Activated naive CD4-positive, alpha-beta T cell treated with anti-CD3 and anti-CD28 coated beads, Interleukin-2, amount 10 ng/mL, durations not matched to agents 7 days and 5 days (primary cell): ENCODE measurements at regions of chr19 and their contacts with region 1.

Region 1: DNA sequence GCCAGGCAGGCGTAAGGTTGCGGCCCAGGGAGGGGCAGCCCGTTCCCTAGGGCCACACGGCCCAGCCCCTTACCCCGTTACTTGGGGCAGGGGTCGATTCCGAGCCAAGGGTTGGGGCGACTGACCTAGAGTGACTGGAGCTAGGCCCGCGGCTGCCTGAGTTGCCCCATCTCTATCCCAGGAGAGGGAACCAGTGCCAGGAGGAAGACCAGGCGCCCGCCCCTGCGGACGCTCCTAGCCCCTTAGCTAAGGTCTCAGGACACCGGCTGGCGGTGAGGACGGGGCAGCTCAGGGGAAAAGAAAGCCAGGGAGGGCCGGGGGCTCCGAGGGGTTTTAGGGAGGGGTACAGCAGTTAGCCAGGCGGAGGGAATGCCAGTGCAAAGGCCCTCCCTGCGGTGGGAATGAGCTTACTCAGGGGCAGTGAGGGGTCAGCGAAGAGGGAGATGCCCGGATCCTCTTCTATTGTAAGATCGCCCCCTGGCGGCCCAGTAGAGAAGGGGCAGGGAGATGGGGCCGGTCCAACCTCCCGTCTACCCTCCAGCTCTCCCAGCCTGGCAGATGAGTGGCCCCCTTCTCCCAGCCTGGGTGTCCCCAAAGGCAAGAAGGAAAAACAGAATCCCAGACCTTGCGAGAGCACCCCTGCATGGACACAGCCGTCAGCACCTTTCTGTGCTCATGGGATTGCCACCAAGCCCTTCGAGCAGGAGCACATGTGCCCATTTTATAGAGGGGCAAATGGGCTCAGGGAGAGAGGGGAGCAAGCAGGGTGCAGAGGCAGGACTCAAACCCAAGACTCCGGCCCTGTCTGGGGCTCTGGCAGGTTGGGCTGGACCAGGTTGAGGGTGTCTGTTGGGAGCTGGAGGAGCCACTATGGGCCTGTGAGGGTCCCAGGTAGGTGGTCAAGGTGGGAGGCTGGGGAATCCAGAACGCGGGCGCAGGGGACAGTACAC is 16.3 kb downstream of the CILP2 start:
- DNase-seq: peak; percentile 68
- H3K4me3 Mint-ChIP-seq: no peak overlapping the region
- H3K27ac Mint-ChIP-seq: peak overlapping the region; percentile 52
- H3K4me1 Mint-ChIP-seq: peaks cover 19% of the 10 kb centered on the region
- H3K27me3 Mint-ChIP-seq: peaks cover 8% of the 10 kb centered on the region

Region 2: DNA sequence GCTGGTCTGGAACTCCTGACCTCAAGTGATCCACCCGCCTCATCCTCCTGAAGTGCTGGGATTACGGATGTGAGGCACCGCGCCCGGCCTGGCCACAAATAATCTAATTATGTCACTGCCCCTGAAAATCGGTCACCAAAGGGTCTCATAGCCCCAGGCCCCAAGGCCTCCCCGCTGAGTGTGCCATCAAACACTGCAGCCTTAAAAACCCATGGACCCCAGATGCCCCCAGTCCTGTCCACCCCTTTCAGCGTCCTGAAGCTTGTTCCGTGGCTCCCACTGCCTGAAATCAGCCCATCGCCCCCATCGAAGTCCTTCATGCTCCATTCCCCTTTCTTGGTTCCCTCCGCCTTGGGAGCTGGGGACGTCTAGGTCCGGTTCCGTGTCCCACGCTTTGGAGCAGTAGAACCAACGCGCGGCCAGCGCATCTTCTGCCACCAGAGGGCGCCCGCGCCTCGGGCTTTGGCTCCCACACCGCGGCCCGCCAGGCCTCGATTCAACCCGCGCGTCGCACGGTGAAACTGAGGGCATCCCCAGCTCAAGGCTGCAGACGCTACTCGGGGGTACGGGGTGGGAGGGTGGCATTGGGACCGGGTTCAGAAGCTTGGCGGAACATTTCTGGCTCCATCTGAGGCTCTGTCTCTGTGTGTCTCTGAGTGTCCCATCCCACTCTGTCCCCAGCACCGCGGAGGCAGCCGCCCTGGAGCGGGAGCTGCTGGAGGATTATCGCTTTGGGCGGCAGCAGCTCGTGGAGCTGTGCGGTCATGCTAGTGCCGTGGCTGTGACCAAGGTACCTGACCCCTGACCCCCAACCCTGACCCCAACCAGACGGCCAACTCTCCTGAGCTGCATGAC is 22.2 kb before region 1 on chr19:
- CTCF ChIA-PET with region 1: interaction called, 32 read pairs
- DNase-seq: peak; percentile 89
- H3K4me3 Mint-ChIP-seq: no peak overlapping the region
- H3K27ac Mint-ChIP-seq: peak overlapping the region; percentile 53
- H3K4me1 Mint-ChIP-seq: peaks cover 12% of the 10 kb centered on the region
- H3K27me3 Mint-ChIP-seq: peaks cover 12% of the 10 kb centered on the region

Region 3: GRCh38 chr19:19542319-19542906 is 11.9 kb before region 1 on chr19:
- CTCF ChIA-PET with region 1: interaction called, 11 read pairs
- DNase-seq: no peak
- H3K4me3 Mint-ChIP-seq: no peak overlapping the region
- H3K27ac Mint-ChIP-seq: no peak overlapping the region
- H3K4me1 Mint-ChIP-seq: peaks cover 31% of the 10 kb centered on the region
- H3K27me3 Mint-ChIP-seq: peaks cover 65% of the 10 kb centered on the region

Region 4: DNA sequence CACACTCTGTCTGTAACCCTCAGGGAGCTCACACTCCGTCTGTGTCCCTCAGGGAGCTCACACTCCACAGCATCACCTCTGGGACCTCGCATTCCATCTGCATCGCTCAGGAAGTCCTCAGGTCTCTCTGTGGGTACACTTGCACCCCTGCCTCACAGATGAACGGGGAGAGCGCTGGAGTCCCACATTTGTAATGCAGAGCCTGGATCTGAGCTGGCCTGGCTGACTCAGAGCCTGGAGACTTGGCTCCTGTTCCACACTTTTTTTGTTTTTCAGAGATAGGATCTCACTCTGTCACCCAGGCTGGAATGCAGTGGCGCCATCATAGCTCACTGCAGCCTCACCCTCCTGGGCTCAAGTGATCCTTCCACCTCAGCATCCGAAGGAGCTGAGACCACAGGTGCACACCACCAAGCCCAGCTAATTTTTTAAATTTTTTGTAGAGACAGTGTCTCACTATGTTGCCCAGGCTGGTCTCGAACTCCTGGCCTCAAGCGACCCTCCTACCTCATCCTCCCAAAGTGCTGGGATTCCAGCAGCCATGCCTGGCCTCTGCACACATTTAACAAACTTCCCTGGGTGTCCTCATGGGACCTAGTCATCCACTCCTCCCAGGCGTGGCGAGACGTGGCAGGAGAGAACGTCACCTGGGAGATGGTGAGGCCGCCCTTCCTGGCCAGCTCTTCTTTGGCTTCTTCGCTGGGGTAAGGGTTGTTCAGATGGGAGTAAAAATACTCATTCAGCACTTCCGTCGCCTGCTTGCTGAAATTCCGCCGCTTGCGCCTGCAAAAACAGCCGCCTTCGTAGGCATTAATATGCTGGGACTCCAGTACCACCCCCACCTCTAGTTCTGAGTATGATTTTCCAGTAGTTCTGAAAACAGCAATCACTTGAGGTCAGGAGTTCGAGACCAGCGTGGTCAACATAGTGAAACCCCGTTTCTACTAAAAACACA is 14.7 kb after region 1 on chr19:
- CTCF ChIA-PET with region 1: interaction called, 14 read pairs
- DNase-seq: no peak
- H3K4me3 Mint-ChIP-seq: no peak overlapping the region
- H3K27ac Mint-ChIP-seq: peak overlapping the region; percentile 45
- H3K4me1 Mint-ChIP-seq: no peaks in the 10 kb centered on the region
- H3K27me3 Mint-ChIP-seq: no peaks in the 10 kb centered on the region

Region 5: GRCh38 chr19:19578252-19578651 is 23.9 kb after region 1 on chr19:
- CTCF ChIA-PET with region 1: interaction called, 19 read pairs
- DNase-seq: no peak
- H3K4me3 Mint-ChIP-seq: no peak overlapping the region
- H3K27ac Mint-ChIP-seq: no peak overlapping the region
- H3K4me1 Mint-ChIP-seq: peaks cover 37% of the 10 kb centered on the region
- H3K27me3 Mint-ChIP-seq: no peaks in the 10 kb centered on the region

Region 6: DNA sequence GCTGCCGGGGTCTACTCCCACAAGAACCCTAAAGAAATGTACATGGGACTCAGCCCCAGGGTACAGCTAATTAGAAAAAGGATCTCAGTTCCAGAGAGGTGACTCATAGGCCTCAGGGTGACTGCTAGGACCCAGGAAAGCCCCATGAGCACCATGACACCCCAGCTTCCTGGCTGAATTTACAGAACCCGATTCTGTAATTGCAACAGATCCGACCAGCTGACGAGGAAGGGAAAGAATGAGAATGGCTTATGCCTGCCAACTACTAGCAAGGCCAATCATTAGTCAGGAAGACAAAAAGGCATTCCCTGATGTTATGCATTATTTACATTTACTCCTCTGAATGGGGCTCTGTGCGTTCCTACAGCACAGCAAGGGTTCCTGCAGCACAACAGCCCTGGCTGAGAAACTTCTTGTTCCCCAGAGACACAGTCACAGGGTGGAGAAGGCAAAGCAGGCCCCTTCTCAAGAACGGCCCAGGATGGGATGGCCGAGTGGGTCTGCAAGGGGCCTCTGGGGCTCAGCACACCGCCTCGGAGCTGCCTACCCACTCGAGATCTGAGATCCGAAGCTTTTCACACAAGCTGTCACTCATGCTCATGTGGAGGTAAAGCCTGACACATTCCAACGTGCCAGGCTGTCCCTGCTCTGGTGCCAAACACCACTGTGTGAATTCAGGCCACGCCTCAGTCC is 36.9 kb after region 1 on chr19:
- CTCF ChIA-PET with region 1: interaction called, 13 read pairs
- DNase-seq: peak; percentile 68
- H3K4me3 Mint-ChIP-seq: no peak overlapping the region
- H3K27ac Mint-ChIP-seq: peak overlapping the region; percentile 93
- H3K4me1 Mint-ChIP-seq: peaks cover 77% of the 10 kb centered on the region
- H3K27me3 Mint-ChIP-seq: no peaks in the 10 kb centered on the region